Heart left ventricle (tissue), 16 donors: ENCODE measurements at regions of chr12 and their contacts with region 1.

Region 1: DNA sequence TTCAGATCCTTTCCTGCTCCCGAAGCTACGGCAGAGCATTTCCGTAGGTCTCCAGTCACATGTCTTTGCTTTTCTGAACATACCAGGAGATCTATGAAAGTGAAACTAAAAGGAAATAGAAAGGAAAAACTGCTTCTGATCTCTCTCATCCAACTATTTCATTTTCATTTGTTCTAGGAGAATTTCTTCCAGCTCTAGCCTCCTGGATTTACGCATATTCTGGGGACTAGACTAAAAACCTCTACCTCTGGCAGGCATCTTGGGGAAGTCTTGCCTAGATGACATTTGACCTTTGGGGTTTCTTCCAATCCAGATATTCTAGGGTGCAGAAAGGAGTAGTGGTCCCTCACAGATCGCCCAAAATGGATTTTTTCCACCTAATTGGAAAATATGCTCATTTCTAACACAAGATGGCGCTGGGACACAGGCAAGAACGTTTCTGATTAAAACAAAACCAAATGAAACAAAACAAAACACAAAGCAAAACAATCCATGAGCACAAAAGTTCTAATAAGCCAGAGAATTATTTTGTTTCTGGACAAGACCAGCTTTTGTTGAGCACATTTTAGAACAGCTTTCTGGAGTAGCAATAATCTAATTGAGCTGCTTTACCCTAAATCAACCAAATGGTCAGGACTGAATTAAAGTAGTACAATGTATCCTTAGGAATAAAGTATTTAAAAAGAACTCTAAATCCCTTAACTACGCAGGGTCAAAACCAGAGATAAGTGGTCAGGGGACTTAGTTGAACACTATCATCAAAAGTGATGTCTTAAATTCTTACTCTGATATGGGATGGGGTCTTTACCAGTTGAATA is 12.3 kb upstream of the PARP11 start:
- DNase-seq: peak in 1 of 5 donors; percentile 26
- ATAC-seq: peak in 2 of 4 donors; percentile 34 to 56
- H3K4me3 ChIP-seq: peak overlapping the region in 9 of 12 donors; percentile 20 to 56 (median 45)
- H3K27ac ChIP-seq: peak overlapping the region in 11 of 12 donors; percentile 17 to 72 (median 61)
- H3K4me1 ChIP-seq: peaks cover 0 to 11% (median 0%) of the 10 kb centered on the region in 12 donors
- H3K27me3 ChIP-seq: peaks cover 0 to 16% (median 0%) of the 10 kb centered on the region in 9 donors
- CTCF ChIP-seq: peak; percentile 59 to 89 (median 80)
- POLR2A ChIP-seq: no peak

Region 2: DNA sequence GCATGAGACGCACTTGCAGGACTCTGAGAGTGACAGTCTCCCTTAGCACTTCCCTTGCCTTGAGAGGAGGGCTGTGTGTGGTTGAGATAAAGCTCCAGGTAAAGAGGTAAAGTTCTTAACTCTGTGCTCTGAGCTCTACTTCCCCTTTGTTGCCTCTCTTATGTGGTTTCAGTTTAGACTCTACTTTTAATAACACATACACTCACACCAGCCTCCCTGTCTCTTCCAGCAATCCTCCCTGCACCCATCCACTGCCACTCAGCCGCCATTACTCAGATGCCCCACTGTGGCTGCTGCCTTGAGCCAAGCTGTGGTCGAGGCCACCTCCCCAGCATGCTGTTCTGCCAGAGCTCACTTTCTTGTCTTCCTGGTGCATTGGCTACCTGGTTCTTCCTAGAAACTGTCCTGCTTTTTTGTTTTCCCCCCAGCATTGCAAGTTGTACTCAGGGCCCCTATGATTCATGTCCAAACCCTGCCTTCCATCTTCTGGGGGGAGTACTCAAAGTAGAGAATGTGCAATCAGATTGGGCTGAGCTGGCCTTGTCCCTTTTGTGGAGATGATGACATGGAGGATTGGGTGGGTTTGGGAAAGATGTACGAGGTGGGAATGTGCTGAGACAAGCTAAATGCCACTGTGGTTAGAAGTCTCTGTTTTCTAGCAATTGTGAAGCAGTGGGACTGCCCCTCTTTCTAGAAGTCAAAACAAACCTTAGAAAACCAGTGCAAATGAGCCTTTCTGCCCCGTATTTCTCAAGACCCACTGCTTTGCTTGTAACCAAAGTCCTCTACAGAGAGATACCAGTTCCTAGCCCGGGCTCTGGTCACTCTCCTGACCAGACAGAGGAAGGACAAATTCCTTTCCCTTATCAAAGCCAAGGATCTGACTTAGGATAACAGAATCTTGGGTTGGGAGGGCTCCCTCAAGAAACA is 103.3 kb after region 1 on chr12:
- intact Hi-C with region 1: loop called in 1 of 10 experiments (anchors 5 kb)
- DNase-seq: no peak
- ATAC-seq: no peak
- H3K4me3 ChIP-seq: no peak overlapping the region
- H3K27ac ChIP-seq: peak overlapping the region in 1 of 12 donors; percentile 10
- H3K4me1 ChIP-seq: no peaks in the 10 kb centered on the region
- H3K27me3 ChIP-seq: peaks cover 0 to 40% (median 4%) of the 10 kb centered on the region in 9 donors
- CTCF ChIP-seq: no peak
- POLR2A ChIP-seq: no peak

Region 3: DNA sequence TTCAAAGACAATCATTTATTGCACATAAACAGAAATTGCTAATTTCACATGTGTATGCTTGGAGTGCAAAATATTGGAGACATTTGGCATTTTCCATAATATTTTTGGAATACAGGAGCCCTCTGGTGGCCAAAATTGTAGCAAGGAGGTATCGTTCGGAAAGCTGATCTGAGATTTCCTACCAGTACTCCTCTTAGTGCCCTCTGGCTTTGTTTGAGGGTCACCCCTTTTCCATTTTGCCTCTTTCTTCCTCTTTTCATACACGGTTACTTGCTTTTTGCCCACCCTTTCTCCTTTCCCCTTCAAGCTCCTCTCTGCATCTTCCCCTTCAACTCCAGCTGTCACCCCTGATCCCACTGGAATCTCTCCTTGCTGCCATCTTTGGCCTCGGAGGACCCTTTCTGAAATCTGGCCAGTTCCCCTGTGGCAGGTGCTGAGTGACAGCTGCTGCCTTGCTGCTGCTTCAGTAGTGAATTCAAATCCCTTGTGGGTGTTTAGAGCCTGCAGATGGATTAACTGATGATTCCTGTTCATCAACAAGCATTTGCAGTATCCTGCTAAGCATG is 152.3 kb after region 1 on chr12:
- intact Hi-C with region 1: loop called (anchors 1 to 5 kb)
- DNase-seq: peak in 1 of 5 donors; percentile 34
- ATAC-seq: peak in 1 of 4 donors; percentile 20
- H3K4me3 ChIP-seq: no peak overlapping the region
- H3K27ac ChIP-seq: no peak overlapping the region
- H3K4me1 ChIP-seq: peaks cover 0 to 2% (median 0%) of the 10 kb centered on the region in 12 donors
- H3K27me3 ChIP-seq: peaks cover 0 to 4% (median 0%) of the 10 kb centered on the region in 9 donors
- CTCF ChIP-seq: peak; percentile 52 to 80 (median 70)
- POLR2A ChIP-seq: no peak

Region 4: DNA sequence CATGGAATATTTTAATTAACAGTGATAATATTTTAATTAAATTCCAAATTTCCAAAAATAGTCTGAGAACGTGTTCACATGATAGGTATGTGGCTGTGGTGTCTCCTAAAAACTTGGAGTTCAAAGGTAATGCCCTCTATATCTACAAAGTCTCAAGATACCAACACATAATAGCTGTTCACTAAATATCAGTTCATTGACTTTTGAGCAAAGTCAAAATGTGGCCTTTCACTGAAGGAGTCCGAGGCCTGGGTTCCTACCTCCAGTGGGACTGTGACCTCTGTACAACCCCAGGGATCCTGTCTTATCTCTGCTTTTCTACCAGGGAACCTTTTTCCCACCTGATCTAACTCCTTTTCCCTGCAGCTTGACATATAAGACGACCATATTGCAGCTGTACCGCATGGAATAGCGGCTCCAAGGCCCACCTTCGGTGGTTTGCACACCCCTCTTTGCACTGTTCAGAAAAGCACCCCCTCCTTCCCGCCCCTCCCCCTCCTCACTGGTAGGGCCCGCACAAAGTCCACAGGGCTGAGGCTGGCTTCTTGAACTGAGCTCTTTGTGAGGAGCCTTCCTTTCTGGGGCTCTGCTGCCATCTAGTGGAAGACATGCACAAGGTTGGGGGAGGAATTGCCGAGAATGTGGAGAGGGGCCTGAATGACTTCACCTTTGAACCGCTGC is 391.2 kb after region 1 on chr12:
- intact Hi-C with region 1: loop called (anchors 2 to 10 kb)
- DNase-seq: peak; percentile 84 to 91 (median 89)
- ATAC-seq: peak; percentile 29 to 47 (median 38)
- H3K4me3 ChIP-seq: peak overlapping the region in 10 of 12 donors; percentile 13 to 96 (median 88)
- H3K27ac ChIP-seq: peak overlapping the region in 11 of 12 donors; percentile 88 to 98 (median 95)
- H3K4me1 ChIP-seq: peaks cover 7 to 77% (median 66%) of the 10 kb centered on the region in 12 donors
- H3K27me3 ChIP-seq: peaks cover 0 to 19% (median 0%) of the 10 kb centered on the region in 9 donors
- CTCF ChIP-seq: peak; percentile 73 to 93 (median 88)
- POLR2A ChIP-seq: no peak

Region 5: GRCh38 chr12:4526923-4527546 is 641.5 kb after region 1 on chr12:
- intact Hi-C with region 1: loop called in 6 of 10 experiments (anchors 10 kb)
- DNase-seq: no peak
- ATAC-seq: no peak
- H3K4me3 ChIP-seq: no peak overlapping the region
- H3K27ac ChIP-seq: no peak overlapping the region
- H3K4me1 ChIP-seq: no peaks in the 10 kb centered on the region
- H3K27me3 ChIP-seq: no peaks in the 10 kb centered on the region
- CTCF ChIP-seq: peak; percentile 51 to 79 (median 62)
- POLR2A ChIP-seq: no peak